ENCODE measurements at regions of chr19 and their contacts with region 1.

Region 1: GRCh38 chr19:39677961-39678889 is 22.5 kb downstream of the LGALS16 start:
- DNase-seq: peak; percentile 58 to 65
- H3K4me3 ChIP-seq: peak overlapping the region; percentile 33; the same call in 1 of the 2 replicates
- H3K27ac ChIP-seq: no peak overlapping the region
- H3K4me1 ChIP-seq: no peaks in the 10 kb centered on the region
- H3K27me3 ChIP-seq: peaks cover 40% of the 10 kb centered on the region
- CTCF ChIP-seq: no peak

Region 2: DNA sequence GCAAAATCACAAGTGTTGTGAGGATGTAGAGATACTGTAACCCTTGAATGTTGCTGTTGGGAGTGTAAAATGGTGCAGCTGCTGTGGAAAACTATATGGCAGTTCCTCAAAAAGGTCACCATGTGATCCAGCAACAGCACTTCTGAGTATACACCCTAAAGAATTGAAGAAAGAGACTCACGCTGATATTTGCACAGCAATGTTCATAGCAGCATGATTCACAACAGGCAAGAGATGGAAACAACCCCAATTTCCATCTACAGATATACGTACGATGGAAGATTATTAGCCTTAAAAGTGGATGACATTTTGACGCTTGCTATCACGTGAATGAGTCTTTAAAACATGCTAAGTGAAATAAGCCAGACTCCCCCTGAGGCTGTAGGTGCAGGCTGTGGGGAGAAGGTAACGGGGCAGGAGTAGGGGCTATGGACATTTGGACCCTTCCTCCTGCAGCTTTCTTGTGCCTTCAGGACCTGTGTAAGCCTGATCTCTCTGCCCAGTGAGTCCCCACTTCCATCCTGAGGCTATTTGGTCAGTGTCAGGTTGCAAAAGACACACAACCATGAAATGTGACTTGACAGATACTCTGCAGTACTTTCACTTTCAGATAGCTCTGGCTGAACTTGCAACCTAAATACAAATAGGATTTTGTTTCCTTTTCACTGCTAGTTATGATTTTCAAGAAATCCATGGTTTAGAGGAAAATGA is 120.6 kb before region 1 on chr19:
- CTCF ChIA-PET with region 1: no interaction called
- POLR2A ChIA-PET with region 1: interaction called, 6 read pairs
- intact Hi-C with region 1: loop called (anchors 1 kb)
- DNase-seq: peak; percentile 44 to 75
- H3K4me3 ChIP-seq: no peak overlapping the region
- H3K27ac ChIP-seq: no peak overlapping the region
- H3K4me1 ChIP-seq: peaks cover 10% of the 10 kb centered on the region; the same call in 1 of the 2 replicates
- H3K27me3 ChIP-seq: peaks cover 34% of the 10 kb centered on the region
- CTCF ChIP-seq: no peak

Region 3: GRCh38 chr19:39692166-39692565 is 13.9 kb after region 1 on chr19:
- CTCF ChIA-PET with region 1: no interaction called
- POLR2A ChIA-PET with region 1: no interaction called
- intact Hi-C with region 1: loop called (anchors 1 kb)
- DNase-seq: no peak
- H3K4me3 ChIP-seq: no peak overlapping the region
- H3K27ac ChIP-seq: no peak overlapping the region
- H3K4me1 ChIP-seq: no peaks in the 10 kb centered on the region
- H3K27me3 ChIP-seq: peaks cover 12% of the 10 kb centered on the region
- CTCF ChIP-seq: no peak

Region 4: GRCh38 chr19:39765091-39766076 is 87.2 kb after region 1 on chr19:
- CTCF ChIA-PET with region 1: interaction called, 8 read pairs
- POLR2A ChIA-PET with region 1: no interaction called
- intact Hi-C with region 1: loop called (anchors 1 kb)
- DNase-seq: peak in 1 of 2 experiments; percentile 21
- H3K4me3 ChIP-seq: no peak overlapping the region
- H3K27ac ChIP-seq: no peak overlapping the region
- H3K4me1 ChIP-seq: no peaks in the 10 kb centered on the region
- H3K27me3 ChIP-seq: peaks cover 48% of the 10 kb centered on the region
- CTCF ChIP-seq: peak; percentile 87

Region 5: DNA sequence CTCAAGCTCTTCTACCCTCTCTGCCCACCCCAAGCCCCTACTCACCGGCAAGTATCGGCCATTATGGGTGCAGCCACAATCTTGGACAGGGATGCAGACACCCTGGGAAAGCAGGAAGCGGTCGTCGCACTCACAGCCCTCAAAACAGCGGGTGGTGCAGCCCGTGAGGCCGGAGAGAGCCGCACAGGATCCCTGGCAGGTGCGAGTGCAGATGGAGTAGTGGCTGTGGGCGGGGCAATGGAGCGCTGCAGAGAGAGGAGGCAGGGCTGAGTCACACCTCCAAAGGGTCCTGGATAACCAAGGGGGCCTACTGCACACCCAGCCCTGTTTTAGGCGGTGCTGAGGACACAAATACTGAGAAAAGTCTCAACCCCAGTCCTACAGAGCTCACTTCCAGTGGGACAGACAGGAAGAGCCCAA is 192.0 kb after region 1 on chr19:
- CTCF ChIA-PET with region 1: no interaction called
- POLR2A ChIA-PET with region 1: no interaction called
- intact Hi-C with region 1: no loop called
- DNase-seq: no peak
- H3K4me3 ChIP-seq: no peak overlapping the region
- H3K27ac ChIP-seq: no peak overlapping the region
- H3K4me1 ChIP-seq: no peaks in the 10 kb centered on the region
- H3K27me3 ChIP-seq: peaks cover 6% of the 10 kb centered on the region
- CTCF ChIP-seq: no peak

Measured in PC-9 (cell line).